ENCODE measurements at regions of chr6 and their contacts with region 1.

Region 1: DNA sequence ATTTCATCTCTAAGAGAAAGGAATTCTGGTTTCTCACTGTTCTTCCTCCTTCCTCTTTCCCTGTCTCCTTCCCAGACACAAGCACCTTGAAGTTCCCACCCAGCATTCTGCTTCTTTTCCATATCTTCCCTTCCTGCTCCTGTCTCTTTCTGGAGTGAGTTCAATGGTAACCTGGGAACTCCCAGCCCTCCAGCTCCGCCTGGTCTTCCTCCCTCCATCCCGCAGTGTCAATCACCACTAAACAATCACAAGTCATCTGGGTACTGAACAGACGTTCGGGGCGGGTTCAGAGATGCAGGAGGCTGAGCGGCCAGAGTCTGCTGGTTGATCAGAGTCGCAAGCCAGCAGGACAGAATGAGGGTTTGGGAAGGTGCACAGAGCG is 7.7 kb downstream of the TTBK1 start:
- DNase-seq: no peak
- CTCF ChIP-seq: no peak

Region 2: GRCh38 chr6:43506667-43507471 is 255.9 kb after region 1 on chr6:
- in situ Hi-C with region 1: loop called (anchors 10 kb)
- DNase-seq: peak; percentile 89
- CTCF ChIP-seq: peak; percentile 90

Region 3: GRCh38 chr6:44399991-44400390 is 1149.0 kb after region 1 on chr6:
- in situ Hi-C with region 1: no loop called
- DNase-seq: no peak
- CTCF ChIP-seq: no peak